HEK293T (cell line): ENCODE measurements at regions of chr6 and their contacts with region 1.

Region 1: DNA sequence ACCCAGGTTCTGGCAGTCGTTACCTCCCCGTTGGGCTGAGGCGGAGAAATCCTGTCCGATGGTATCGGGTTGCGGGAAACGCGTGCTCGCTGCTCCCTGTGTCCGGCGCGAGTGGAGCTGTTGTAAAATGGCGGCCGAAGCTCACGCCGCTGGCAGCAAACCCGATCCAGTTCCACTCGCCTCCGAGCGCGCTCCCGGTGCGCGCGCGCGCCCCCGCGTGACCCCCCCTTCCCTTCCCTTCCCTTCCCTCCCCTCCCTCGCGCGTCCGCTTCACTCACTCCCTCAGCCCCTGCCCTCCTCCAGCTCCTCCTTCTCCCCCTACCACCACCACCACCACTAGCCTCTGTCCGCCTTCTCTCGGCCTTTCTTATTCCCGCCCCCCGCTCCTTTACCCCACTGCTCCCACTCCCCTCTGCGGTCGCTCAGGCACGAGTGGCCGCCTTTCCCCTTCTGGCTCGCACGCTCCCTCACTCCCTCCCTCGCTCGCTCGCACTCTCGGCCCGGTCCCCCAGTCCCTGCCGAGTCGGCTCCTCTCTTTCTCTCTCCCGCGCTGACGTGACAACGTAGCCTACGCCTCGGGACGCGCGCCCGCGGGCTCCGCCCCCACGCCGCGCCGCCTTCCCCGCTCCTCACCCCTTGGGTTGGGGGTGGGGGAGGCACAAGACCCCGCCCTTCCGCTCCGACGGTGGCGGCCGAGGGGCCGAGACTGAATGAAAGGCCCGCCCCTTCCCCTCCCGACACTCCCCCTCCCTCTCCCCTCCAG is at the start of gene SYNCRIP:
- DNase-seq: peak; percentile 87

Region 2: GRCh38 chr6:85593438-85594196 is 49.3 kb before region 1 on chr6 and contains the start of gene SNX14:
- CTCF ChIA-PET with region 1: no interaction called
- POLR2A ChIA-PET with region 1: interaction called, 17 read pairs
- DNase-seq: peak; percentile 85

Region 3: DNA sequence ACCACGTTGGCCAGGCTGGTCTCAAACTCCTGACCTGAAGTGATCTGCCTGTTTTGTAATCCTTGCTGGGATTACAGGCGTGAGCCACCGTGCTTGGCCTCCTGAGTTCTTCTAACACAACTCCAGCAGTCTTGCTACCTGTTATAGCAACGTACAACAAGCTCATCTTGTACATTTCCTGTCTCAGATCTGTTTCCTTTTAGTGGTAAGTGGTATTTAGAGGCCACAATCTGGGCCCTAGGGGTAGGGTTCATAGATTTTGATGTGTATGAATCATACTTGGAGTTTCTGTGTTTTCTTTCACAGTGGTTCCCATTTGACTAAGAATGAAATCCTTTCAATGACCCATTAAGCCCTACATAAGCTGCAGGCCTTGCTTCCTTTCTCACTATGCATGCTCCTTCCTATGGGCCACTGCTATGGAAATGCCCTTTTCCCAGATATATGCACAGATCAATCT is 26.8 kb after region 1 on chr6:
- CTCF ChIA-PET with region 1: interaction called, 5 read pairs
- POLR2A ChIA-PET with region 1: interaction called, 158 read pairs
- DNase-seq: no peak

Region 4: DNA sequence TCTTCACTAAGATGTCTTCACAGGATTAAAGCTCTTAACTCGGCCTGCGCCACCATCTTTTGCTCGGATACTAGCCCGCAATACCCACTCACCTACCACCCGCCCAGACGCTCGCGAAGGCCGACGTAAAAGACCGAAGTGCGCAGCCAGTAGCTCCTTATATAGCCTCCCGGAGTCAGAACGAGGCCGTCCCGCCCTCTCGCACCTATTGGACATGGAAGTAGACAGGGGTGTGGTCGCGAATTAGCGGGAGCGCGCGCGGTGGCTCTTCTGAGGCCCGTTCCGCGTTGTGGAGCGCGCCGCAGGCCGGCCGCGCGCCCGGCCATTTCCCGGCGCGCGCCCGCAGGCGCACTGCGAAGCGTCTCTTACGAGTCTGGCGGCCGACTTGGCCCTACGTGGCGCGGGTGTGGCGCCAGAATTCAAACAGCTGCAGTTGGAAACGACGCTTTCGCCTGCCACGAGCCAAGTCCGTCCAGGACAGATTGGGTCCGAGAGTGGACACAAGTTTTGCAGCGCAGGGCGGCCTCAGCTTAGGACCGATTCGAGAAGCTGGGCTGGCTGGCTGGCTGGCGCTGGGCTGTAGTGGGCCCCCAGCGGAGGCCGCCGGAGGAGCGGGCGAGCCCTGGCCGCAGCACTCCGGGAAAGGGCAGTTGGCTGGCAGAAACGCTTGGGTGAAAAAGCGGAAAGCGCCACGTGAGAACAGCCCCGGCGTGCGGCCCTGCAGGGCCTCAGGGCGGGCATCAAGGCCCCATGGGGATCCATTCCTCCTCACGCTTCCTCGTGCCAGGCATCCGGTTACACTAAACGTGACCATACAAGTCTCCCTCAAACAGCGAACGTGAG is 35.9 kb after region 1 on chr6:
- CTCF ChIA-PET with region 1: interaction called, 11 read pairs
- POLR2A ChIA-PET with region 1: interaction called, 158 read pairs
- DNase-seq: peak; percentile 95